ENCODE measurements at regions of chr10 and their contacts with region 1.

Region 1: GRCh38 chr10:84537447-84537931 is 209.1 kb downstream of the CCSER2 start:
- DNase-seq: no peak
- H3K4me3 ChIP-seq: no peak overlapping the region
- H3K27me3 ChIP-seq: no peaks in the 10 kb centered on the region
- CTCF ChIP-seq: peak; percentile 62

Region 2: DNA sequence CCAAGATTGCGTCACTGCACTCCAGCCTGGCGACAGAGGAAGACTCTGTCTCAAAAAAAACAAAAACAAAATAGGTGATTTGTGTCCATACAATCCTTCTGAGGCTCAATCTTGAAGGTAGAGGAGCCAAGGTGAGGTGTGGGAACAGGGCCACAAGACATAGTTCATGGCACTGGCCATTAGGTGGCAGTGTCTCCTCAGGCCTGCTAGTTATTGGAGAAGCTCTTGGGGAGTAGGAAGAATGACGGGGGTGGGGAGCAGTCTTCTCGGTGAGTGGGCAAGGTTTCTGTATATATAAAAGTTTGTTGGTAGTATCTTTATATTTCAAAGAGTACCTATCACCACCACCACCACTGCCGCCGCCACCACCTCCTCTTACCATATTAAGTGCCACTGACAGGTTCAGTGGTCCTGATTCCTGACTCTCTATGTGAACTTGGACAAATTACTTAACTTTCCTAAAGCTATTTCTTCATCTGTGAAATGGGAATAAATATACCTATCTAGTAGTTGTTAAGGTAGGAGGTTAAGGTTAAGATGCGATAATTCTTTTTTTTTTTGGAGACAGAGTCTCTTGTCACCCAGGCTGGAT is 185.1 kb before region 1 on chr10:
- CTCF ChIA-PET with region 1: interaction called, 10 read pairs
- POLR2A ChIA-PET with region 1: no interaction called
- DNase-seq: no peak
- H3K4me3 ChIP-seq: no peak overlapping the region
- H3K27me3 ChIP-seq: no peaks in the 10 kb centered on the region
- CTCF ChIP-seq: peak; percentile 82

Region 3: DNA sequence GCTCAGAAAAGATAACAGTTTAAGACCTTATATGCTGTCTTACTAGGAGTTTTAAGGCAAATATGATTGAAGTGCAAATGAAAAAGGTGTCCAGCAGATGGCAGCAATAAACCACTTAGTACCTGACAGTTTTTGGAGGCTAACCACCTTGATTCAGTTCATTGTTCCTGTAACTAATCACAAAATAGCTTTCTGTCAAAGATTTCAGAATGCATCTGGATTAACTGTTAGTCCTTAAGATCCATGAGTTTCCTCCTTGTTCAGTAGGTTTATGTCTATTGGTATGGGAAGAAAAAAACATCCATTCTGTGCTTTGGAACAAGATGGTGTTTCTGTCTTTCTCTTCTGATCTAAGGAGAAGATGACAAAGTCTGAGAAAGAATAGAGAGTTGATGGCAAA is 162.5 kb before region 1 on chr10:
- CTCF ChIA-PET with region 1: interaction called, 106 read pairs
- POLR2A ChIA-PET with region 1: no interaction called
- DNase-seq: peak; percentile 12
- H3K4me3 ChIP-seq: no peak overlapping the region
- H3K27me3 ChIP-seq: no peaks in the 10 kb centered on the region
- CTCF ChIP-seq: peak; percentile 62

Region 4: DNA sequence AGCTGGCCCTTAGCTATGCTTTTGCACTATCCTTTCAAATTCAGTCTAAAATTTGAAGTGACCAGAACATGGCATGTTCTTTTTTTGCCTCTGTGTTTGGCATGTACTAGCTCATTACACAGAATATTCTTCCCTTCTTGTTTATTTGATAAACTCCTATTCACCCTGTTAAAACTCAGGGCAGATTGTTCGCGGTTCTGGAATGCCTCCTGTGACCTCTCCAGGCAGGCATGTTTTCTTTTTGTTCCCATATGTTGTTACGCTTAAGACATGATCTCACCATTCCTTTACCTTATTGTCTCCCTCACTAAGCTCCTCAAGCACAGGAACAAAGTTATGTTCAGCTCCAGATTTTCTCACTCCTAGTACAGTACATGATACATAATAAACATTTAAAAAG is 27.4 kb before region 1 on chr10:
- CTCF ChIA-PET with region 1: interaction called, 12 read pairs
- POLR2A ChIA-PET with region 1: interaction called, 4 read pairs
- DNase-seq: peak; percentile 17
- H3K4me3 ChIP-seq: no peak overlapping the region
- H3K27me3 ChIP-seq: no peaks in the 10 kb centered on the region
- CTCF ChIP-seq: no peak